ENCODE measurements at regions of chr5 and their contacts with region 1.

Region 1: DNA sequence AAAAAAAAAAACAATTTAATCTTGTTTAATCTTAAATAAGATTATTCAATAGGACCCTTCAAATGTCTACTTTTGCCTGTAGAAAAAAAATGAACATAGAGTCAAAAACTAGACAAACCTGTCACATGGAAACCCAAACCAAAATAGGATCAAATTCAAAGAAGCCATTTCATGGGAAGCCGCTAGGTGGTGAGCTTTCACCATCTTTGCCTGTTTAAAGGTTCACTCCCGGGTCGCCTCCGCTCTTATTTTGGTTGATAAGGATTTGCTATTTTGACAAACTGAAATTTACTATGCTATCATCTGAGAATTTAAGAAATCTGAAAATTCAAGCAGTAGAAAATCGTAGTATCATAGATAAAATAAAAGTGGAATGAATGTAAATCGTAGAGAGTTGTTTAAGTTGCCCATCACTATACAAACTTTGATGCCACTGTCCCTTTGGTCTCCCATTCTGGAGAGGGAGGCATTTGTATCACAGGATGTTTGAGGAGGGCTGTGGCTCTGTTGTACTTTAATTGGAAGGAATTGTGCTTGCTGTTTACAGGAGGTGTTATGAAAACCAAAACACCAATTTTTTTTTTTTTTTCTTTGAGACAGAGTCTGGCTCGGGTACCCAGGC is 43.5 kb upstream of the DNAH5 start:
- DNase-seq: peak; percentile 84
- H3K4me3 ChIP-seq: no peak overlapping the region
- H3K27ac ChIP-seq: no peak overlapping the region
- H3K4me1 ChIP-seq: peaks cover 16% of the 10 kb centered on the region
- H3K27me3 ChIP-seq: no peaks in the 10 kb centered on the region

Region 2: DNA sequence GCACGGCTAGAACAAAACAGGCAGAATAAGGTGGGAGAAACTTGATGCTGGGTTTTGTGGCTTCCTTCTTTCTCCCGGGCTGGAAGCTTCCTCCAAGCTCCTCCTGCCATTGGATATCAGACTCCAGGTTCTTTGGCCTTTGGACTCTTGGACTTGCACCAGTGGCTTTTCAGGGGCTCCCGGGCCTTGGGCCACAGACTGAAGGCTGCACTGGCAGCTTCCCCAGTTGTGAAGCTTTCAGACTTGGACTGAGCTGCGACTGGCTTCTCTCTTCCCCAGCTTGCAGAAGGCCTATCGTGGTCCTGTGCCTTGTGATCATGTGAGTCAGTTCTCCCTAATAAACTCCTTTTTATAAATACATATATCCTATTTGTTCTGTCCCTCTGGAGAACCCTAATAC is 407.9 kb before region 1 on chr5:
- in situ Hi-C with region 1: no loop called
- DNase-seq: no peak
- H3K4me3 ChIP-seq: no peak overlapping the region
- H3K27ac ChIP-seq: no peak overlapping the region
- H3K4me1 ChIP-seq: no peaks in the 10 kb centered on the region
- H3K27me3 ChIP-seq: no peaks in the 10 kb centered on the region

Region 3: DNA sequence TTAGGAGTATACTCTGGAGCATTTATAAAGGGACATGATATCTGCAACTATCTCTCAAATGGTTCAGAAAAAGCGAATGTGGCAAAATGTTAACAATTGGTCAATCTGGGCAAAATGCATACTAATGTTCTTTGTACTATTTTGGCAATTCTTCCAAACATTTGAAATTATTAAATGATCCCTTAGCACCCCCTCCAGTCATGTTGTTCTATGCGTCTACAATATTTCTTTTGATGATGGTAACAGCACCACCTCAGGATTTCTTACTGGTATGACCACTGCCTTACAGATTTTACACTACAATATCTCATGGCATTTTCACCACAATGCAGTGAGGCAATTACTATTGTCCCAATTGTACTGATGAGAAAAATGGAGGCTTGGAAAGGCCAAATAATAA is 102.3 kb after region 1 on chr5:
- in situ Hi-C with region 1: no loop called
- DNase-seq: no peak
- H3K4me3 ChIP-seq: no peak overlapping the region
- H3K27ac ChIP-seq: no peak overlapping the region
- H3K4me1 ChIP-seq: no peaks in the 10 kb centered on the region
- H3K27me3 ChIP-seq: no peaks in the 10 kb centered on the region

Region 4: GRCh38 chr5:14174230-14174637 is 186.3 kb after region 1 on chr5:
- in situ Hi-C with region 1: no loop called
- DNase-seq: no peak
- H3K4me3 ChIP-seq: no peak overlapping the region
- H3K27ac ChIP-seq: peak overlapping the region; percentile 36
- H3K4me1 ChIP-seq: peaks cover 90% of the 10 kb centered on the region
- H3K27me3 ChIP-seq: no peaks in the 10 kb centered on the region

Region 5: GRCh38 chr5:14264604-14265316 is 276.8 kb after region 1 on chr5:
- in situ Hi-C with region 1: loop called (anchors 25 kb)
- DNase-seq: peak; percentile 98
- H3K4me3 ChIP-seq: peak overlapping the region; percentile 56
- H3K27ac ChIP-seq: peak overlapping the region; percentile 96
- H3K4me1 ChIP-seq: peaks cover 93% of the 10 kb centered on the region
- H3K27me3 ChIP-seq: no peaks in the 10 kb centered on the region